ENCODE measurements at regions of chr16 and their contacts with region 1.

Region 1: DNA sequence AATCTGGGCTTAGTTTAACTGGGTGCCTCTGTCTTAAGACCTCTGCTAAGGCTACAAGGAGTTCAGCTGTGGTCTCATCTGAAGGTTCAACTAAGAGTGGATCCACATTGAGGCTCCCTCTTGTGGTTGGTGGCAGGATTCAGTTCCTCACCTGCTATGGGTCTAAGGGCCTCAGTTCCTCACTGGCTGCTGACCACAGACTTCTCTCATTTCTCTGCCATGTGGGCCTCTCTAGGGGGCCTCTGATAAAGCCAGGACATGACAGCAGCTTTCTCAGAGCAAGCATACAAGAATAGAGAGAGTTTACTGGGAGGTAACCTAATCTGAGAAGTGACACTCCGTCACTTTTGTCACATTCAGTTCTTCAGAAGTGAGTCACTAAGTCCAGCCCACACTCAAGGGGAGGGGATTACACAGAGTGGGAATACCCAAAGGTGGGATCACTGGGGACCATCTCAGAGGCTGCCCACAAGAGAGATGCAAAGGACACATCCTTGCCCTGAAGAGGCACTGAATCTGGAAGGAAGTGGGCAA is 19.2 kb upstream of the ABAT start:
- DNase-seq: no peak
- H3K4me3 ChIP-seq: no peak overlapping the region
- H3K4me3 Mint-ChIP-seq: no peak overlapping the region
- H3K27ac ChIP-seq: no peak overlapping the region
- H3K27ac Mint-ChIP-seq: peak overlapping the region in 1 of 7 donors; percentile 7
- H3K4me1 ChIP-seq: no peaks in the 10 kb centered on the region
- H3K4me1 Mint-ChIP-seq: no peaks in the 10 kb centered on the region
- H3K27me3 ChIP-seq: no peaks in the 10 kb centered on the region
- H3K27me3 Mint-ChIP-seq: no peaks in the 10 kb centered on the region

Region 2: GRCh38 chr16:8567750-8568617 is 87.3 kb before region 1 on chr16:
- CTCF ChIA-PET with region 1: interaction called, 4 read pairs
- POLR2A ChIA-PET with region 1: no interaction called
- intact Hi-C with region 1: loop called (anchors 1 kb)
- DNase-seq: peak; percentile 71 to 82 (median 80)
- H3K4me3 ChIP-seq: no peak overlapping the region
- H3K4me3 Mint-ChIP-seq: peak overlapping the region in 4 of 8 donors; percentile 14 to 41 (median 28)
- H3K27ac ChIP-seq: no peak overlapping the region
- H3K27ac Mint-ChIP-seq: peak overlapping the region in 5 of 7 donors; percentile 48 to 83 (median 62)
- H3K4me1 ChIP-seq: no peaks in the 10 kb centered on the region
- H3K4me1 Mint-ChIP-seq: peaks cover 4 to 10% (median 7%) of the 10 kb centered on the region in 4 donors
- H3K27me3 ChIP-seq: no peaks in the 10 kb centered on the region
- H3K27me3 Mint-ChIP-seq: peaks cover 0 to 16% of the 10 kb centered on the region in 2 donors

Region 3: GRCh38 chr16:8740775-8741355 is 85.6 kb after region 1 on chr16:
- CTCF ChIA-PET with region 1: no interaction called
- POLR2A ChIA-PET with region 1: no interaction called
- intact Hi-C with region 1: no loop called
- DNase-seq: no peak
- H3K4me3 ChIP-seq: no peak overlapping the region
- H3K4me3 Mint-ChIP-seq: no peak overlapping the region
- H3K27ac ChIP-seq: no peak overlapping the region
- H3K27ac Mint-ChIP-seq: no peak overlapping the region
- H3K4me1 ChIP-seq: no peaks in the 10 kb centered on the region
- H3K4me1 Mint-ChIP-seq: no peaks in the 10 kb centered on the region
- H3K27me3 ChIP-seq: no peaks in the 10 kb centered on the region
- H3K27me3 Mint-ChIP-seq: no peaks in the 10 kb centered on the region

Region 4: GRCh38 chr16:8760021-8760420 is 104.8 kb after region 1 on chr16:
- CTCF ChIA-PET with region 1: no interaction called
- POLR2A ChIA-PET with region 1: no interaction called
- intact Hi-C with region 1: no loop called
- DNase-seq: no peak
- H3K4me3 ChIP-seq: no peak overlapping the region
- H3K4me3 Mint-ChIP-seq: no peak overlapping the region
- H3K27ac ChIP-seq: no peak overlapping the region
- H3K27ac Mint-ChIP-seq: no peak overlapping the region
- H3K4me1 ChIP-seq: no peaks in the 10 kb centered on the region
- H3K4me1 Mint-ChIP-seq: no peaks in the 10 kb centered on the region
- H3K27me3 ChIP-seq: no peaks in the 10 kb centered on the region
- H3K27me3 Mint-ChIP-seq: no peaks in the 10 kb centered on the region

Measured in CD4-positive, alpha-beta memory T cell (primary cell).